ENCODE measurements at regions of chr14 and their contacts with region 1.

Region 1: DNA sequence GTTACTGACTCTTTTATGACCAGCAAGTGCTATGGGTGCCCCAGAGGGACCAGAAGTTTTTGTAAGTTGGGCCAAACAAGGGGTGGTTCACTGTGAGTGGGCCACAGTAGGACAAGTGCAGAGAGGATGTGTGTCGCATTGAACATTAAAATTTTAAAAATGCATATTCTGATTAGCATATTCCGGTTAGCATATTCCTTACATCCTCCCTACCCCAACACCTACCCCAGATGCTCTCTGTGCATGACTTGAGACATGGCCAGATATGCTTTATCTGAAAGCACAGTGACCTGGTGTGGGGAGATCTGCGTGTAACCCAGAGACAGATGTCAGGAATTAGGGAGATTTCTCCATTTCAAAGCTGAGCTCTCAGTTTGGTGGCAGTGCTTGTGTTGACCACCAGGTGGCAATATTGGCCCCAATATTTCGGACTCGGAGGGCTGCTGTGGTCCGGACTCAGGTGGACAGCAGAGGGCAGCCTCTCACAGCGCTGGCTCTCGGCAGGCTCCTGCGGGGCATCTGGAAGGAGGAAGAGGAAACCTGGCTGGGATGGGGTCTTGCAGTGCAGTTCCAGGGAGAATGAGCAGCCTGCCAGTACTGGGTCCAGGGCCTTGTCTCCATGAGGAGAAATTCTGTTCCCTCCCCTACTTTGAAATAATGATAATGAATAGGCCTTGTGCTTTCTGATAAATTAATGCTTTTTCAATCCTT is 1.6 kb upstream of the CEBPE start:
- DNase-seq: peak; percentile 90
- ATAC-seq: peak; percentile 82
- H3K4me3 Mint-ChIP-seq: peak overlapping the region; percentile 48
- H3K27ac Mint-ChIP-seq: peak overlapping the region; percentile 88
- H3K4me1 Mint-ChIP-seq: peaks cover 41% of the 10 kb centered on the region
- H3K27me3 Mint-ChIP-seq: no peaks in the 10 kb centered on the region

Region 2: GRCh38 chr14:22886500-22887259 is 234.0 kb before region 1 on chr14:
- CTCF ChIA-PET with region 1: no interaction called
- POLR2A ChIA-PET with region 1: no interaction called
- DNase-seq: peak; percentile 78
- ATAC-seq: peak; percentile 88
- H3K4me3 Mint-ChIP-seq: peak overlapping the region; percentile 75
- H3K27ac Mint-ChIP-seq: peak overlapping the region; percentile 75
- H3K4me1 Mint-ChIP-seq: peaks cover 31% of the 10 kb centered on the region
- H3K27me3 Mint-ChIP-seq: peaks cover 36% of the 10 kb centered on the region

Region 3: DNA sequence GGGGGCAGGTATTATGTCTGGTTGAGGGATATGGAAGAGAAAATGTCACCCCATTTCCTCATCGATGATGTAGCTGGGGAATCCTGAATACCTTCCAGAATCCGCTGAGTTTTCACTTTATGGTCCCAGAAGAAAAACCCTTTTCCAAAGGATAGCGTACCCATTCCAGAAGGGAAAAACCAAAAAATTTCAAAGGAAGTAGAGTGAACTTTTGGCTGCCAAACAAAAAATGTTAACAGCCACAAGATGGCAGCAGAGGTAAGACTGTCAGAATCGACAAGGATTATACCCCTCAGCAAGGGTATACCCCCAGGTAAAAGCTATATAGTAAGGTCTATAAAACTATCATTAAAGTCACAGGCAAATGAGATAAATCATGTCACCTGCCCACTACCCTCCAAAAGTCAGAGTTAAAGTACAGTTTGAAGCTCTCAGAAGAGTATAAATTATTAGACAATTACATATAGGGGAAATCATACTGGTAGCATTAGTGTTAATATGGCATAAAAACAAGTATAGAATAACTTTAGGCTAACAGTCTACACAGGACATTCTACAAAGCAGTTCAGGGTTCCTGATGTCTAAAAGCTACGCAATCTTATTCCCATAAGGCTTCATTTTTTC is 43.8 kb before region 1 on chr14:
- CTCF ChIA-PET with region 1: interaction called, 34 read pairs
- POLR2A ChIA-PET with region 1: no interaction called
- DNase-seq: peak; percentile 56
- ATAC-seq: peak; percentile 63
- H3K4me3 Mint-ChIP-seq: no peak overlapping the region
- H3K27ac Mint-ChIP-seq: no peak overlapping the region
- H3K4me1 Mint-ChIP-seq: peaks cover 5% of the 10 kb centered on the region
- H3K27me3 Mint-ChIP-seq: no peaks in the 10 kb centered on the region

Region 4: GRCh38 chr14:23104591-23105347 is 15.9 kb before region 1 on chr14 and contains the start of gene CIROP:
- CTCF ChIA-PET with region 1: interaction called, 39 read pairs
- POLR2A ChIA-PET with region 1: interaction called, 3 read pairs
- DNase-seq: no peak
- ATAC-seq: no peak
- H3K4me3 Mint-ChIP-seq: no peak within 1 kb of the TSS
- H3K27ac Mint-ChIP-seq: no peak within 1 kb of the TSS
- H3K4me1 Mint-ChIP-seq: no peaks in the 10 kb centered on the region
- H3K27me3 Mint-ChIP-seq: no peaks in the 10 kb centered on the region
- total RNA-seq, gene CIROP: not detected

Region 5: GRCh38 chr14:23160924-23161538 is 40.3 kb after region 1 on chr14:
- CTCF ChIA-PET with region 1: interaction called, 19 read pairs
- POLR2A ChIA-PET with region 1: no interaction called
- DNase-seq: no peak
- ATAC-seq: no peak
- H3K4me3 Mint-ChIP-seq: no peak overlapping the region
- H3K27ac Mint-ChIP-seq: no peak overlapping the region
- H3K4me1 Mint-ChIP-seq: peaks cover 11% of the 10 kb centered on the region
- H3K27me3 Mint-ChIP-seq: peaks cover 3% of the 10 kb centered on the region

Region 6: GRCh38 chr14:23286020-23286905 is 165.6 kb after region 1 on chr14 and contains the start of gene HOMEZ:
- CTCF ChIA-PET with region 1: interaction called, 28 read pairs
- POLR2A ChIA-PET with region 1: interaction called, 5 read pairs
- DNase-seq: peak; percentile 99
- ATAC-seq: peak; percentile 100
- H3K4me3 Mint-ChIP-seq: peak within 1 kb of the TSS; percentile 96
- H3K27ac Mint-ChIP-seq: peak within 1 kb of the TSS; percentile 91
- H3K4me1 Mint-ChIP-seq: peaks cover 18% of the 10 kb centered on the region
- H3K27me3 Mint-ChIP-seq: no peaks in the 10 kb centered on the region
- total RNA-seq, gene HOMEZ: 7.8 to 9.2 TPM

Region 7: DNA sequence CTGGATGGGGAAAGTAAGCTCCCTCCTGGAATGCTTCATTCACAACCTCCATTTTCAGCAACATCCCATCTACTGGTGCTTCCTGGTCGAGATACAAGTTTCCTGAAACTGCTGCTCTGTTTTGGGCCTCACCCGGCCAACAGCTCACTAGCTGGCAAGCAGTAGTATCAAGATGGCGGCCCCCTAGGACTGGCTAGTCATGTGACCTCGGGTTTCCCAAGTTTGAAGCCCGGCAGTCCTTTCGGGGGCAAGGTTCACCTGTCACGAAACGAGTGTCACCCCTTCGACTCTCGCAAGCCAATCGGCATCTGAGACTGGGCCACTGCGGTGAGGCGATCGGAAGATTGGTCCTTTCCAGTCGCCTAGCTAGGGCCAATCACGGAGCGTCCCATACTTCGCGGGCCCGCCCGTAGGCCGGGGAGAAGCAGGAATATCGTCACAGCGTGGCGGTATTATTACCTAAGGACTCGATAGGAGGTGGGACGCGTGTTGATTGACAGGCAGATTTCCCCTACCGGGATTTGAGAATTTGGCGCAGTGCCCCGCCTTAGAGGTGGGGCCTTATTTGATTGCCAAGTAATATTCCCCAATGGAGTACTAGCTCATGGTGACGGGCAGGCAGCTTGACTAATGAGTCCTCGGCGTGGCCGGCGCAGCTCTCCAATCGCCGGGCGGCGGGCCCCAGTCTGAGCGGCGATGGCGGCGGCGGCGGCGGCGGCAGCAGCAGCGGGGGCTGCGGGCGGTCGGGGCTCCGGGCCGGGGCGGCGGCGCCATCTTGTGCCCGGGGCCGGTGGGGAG is 200.3 kb after region 1 on chr14 and contains the start of gene PABPN1:
- CTCF ChIA-PET with region 1: interaction called, 49 read pairs
- POLR2A ChIA-PET with region 1: no interaction called
- DNase-seq: peak; percentile 99
- ATAC-seq: peak; percentile 94
- H3K4me3 Mint-ChIP-seq: peak within 1 kb of the TSS; percentile 92
- H3K27ac Mint-ChIP-seq: peak within 1 kb of the TSS; percentile 97
- H3K4me1 Mint-ChIP-seq: peaks cover 33% of the 10 kb centered on the region
- H3K27me3 Mint-ChIP-seq: no peaks in the 10 kb centered on the region
- total RNA-seq, gene PABPN1: 200 to 210 TPM

Measured in activated CD8-positive, alpha-beta T cell treated with anti-CD3 and anti-CD28 coated beads, Interleukin-2, amount 10 ng/mL, durations not matched to agents 7 days and 5 days (primary cell).